ENCODE measurements at regions of chr3 and their contacts with region 1.

Region 1: DNA sequence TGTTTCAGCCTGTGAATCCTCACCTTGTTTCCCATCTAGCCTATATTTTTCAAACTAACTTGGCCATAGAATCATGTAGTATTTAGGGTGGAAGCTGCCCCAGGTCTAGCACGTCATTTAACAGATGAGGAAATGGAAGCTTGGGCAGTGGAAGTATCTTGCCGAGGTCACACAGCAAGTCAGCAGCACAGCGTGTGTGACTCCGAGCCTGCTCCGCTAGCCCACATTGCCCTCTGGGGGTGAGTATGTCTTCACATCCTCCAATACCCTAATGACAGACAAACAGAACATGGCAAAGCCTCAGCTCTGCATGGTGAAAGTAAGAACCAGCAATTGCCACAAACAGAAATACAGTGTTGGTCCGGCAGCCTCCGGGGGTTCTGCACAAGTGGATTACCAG is 2.2 kb upstream of the CCR5 start:
- DNase-seq: peak; percentile 71 to 81 (median 75)
- H3K4me3 ChIP-seq: no peak overlapping the region
- H3K4me3 Mint-ChIP-seq: peak overlapping the region in 7 of 8 donors; percentile 62 to 80 (median 73)
- H3K27ac ChIP-seq: peak overlapping the region; percentile 52
- H3K27ac Mint-ChIP-seq: peak overlapping the region; percentile 57 to 95 (median 83)
- H3K4me1 ChIP-seq: peaks cover 63% of the 10 kb centered on the region
- H3K4me1 Mint-ChIP-seq: peaks cover 42 to 82% (median 67%) of the 10 kb centered on the region in 4 donors
- H3K27me3 ChIP-seq: no peaks in the 10 kb centered on the region
- H3K27me3 Mint-ChIP-seq: no peaks in the 10 kb centered on the region

Region 2: GRCh38 chr3:46070595-46071093 is 297.9 kb before region 1 on chr3:
- CTCF ChIA-PET with region 1: interaction called, 267 read pairs
- POLR2A ChIA-PET with region 1: interaction called, 14 read pairs
- intact Hi-C with region 1: no loop called
- DNase-seq: peak in 4 of 5 donors; percentile 47 to 56 (median 49)
- H3K4me3 ChIP-seq: no peak overlapping the region
- H3K4me3 Mint-ChIP-seq: peak overlapping the region in 6 of 8 donors; percentile 19 to 65 (median 51)
- H3K27ac ChIP-seq: peak overlapping the region; percentile 13
- H3K27ac Mint-ChIP-seq: peak overlapping the region; percentile 15 to 91 (median 73)
- H3K4me1 ChIP-seq: peaks cover 62% of the 10 kb centered on the region
- H3K4me1 Mint-ChIP-seq: peaks cover 52 to 68% (median 58%) of the 10 kb centered on the region in 4 donors
- H3K27me3 ChIP-seq: no peaks in the 10 kb centered on the region
- H3K27me3 Mint-ChIP-seq: no peaks in the 10 kb centered on the region

Region 3: DNA sequence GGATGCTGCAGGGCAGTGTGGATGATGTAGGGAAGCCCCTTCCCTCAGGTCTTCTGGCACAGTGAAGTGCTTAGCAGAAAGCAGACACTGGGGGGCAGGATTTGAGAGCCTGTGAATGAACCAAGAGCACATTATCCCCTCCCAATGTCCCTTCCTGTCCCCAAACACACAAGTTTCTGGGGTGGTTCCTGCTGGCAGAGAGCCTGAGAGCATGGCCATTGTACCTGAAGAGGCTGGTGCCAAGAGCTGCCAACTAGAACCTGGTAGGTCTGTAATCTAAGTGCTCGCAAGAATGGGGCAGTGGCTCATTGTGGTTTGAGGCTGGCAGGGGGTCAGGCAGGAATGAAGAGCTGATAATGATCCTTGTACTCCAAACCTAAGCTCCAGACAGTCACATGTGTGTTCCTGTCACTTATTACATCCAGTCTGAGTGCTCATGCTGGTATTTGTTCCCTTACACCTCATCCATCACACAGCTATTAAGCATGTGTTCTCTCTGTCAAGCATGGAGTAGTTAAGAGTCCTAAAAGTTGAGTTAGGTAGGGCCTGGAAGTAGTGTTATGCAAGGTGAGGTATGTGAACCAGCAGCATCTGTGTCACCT is 153.7 kb before region 1 on chr3:
- CTCF ChIA-PET with region 1: interaction called, 34 read pairs
- POLR2A ChIA-PET with region 1: interaction called, 12 read pairs
- intact Hi-C with region 1: no loop called
- DNase-seq: no peak
- H3K4me3 ChIP-seq: no peak overlapping the region
- H3K4me3 Mint-ChIP-seq: no peak overlapping the region
- H3K27ac ChIP-seq: no peak overlapping the region
- H3K27ac Mint-ChIP-seq: peak overlapping the region in 1 of 7 donors; percentile 44
- H3K4me1 ChIP-seq: peaks cover 22% of the 10 kb centered on the region
- H3K4me1 Mint-ChIP-seq: no peaks in the 10 kb centered on the region
- H3K27me3 ChIP-seq: no peaks in the 10 kb centered on the region
- H3K27me3 Mint-ChIP-seq: no peaks in the 10 kb centered on the region

Region 4: GRCh38 chr3:46284981-46285683 is 83.4 kb before region 1 on chr3:
- CTCF ChIA-PET with region 1: interaction called, 73 read pairs
- POLR2A ChIA-PET with region 1: interaction called, 67 read pairs
- intact Hi-C with region 1: no loop called
- DNase-seq: peak; percentile 63 to 92 (median 69)
- H3K4me3 ChIP-seq: no peak overlapping the region
- H3K4me3 Mint-ChIP-seq: peak overlapping the region in 7 of 8 donors; percentile 4 to 73 (median 62)
- H3K27ac ChIP-seq: peak overlapping the region; percentile 41
- H3K27ac Mint-ChIP-seq: peak overlapping the region; percentile 59 to 93 (median 87)
- H3K4me1 ChIP-seq: peaks cover 78% of the 10 kb centered on the region
- H3K4me1 Mint-ChIP-seq: peaks cover 56 to 92% (median 66%) of the 10 kb centered on the region in 4 donors
- H3K27me3 ChIP-seq: no peaks in the 10 kb centered on the region
- H3K27me3 Mint-ChIP-seq: no peaks in the 10 kb centered on the region

Region 5: DNA sequence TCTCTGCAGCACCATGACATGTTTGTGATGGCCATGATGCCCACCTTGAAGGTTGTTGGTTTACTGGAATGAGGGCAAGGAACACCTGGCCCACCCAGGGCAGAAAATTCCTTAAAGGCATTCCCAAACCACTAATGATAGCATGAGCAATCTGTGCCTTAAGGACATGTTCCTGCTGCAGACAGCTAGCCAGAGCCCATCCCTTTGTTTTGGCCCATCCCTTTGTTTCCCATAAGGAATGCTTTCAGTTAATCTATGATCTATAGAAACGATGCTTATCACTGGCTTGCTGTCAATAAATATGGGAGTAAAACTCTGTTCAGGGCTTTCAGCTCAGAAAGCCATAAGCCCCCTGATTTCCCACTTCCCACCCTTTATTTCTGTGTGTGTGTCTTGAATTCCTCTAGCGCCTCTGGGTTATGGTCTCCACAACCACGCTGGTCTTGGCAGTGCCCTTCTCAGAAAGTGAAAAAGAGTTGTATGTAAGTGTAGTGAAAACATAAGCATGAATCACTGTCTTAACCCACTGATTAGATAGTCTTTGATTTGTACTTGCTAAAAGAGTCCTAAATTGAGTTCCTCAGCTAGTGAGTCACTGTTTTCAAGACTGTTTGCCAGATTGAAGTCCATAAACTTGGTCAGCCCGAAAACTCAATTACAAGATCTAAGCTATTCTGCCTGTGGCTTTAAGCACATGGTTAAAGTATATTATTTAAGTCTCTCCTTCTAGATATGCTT is 33.7 kb before region 1 on chr3:
- CTCF ChIA-PET with region 1: interaction called, 17 read pairs
- POLR2A ChIA-PET with region 1: no interaction called
- intact Hi-C with region 1: no loop called
- DNase-seq: no peak
- H3K4me3 ChIP-seq: no peak overlapping the region
- H3K4me3 Mint-ChIP-seq: peak overlapping the region in 1 of 8 donors; percentile 39
- H3K27ac ChIP-seq: no peak overlapping the region
- H3K27ac Mint-ChIP-seq: peak overlapping the region in 3 of 7 donors; percentile 11 to 25 (median 14)
- H3K4me1 ChIP-seq: peaks cover 9% of the 10 kb centered on the region
- H3K4me1 Mint-ChIP-seq: peaks cover 6 to 19% (median 11%) of the 10 kb centered on the region in 4 donors
- H3K27me3 ChIP-seq: no peaks in the 10 kb centered on the region
- H3K27me3 Mint-ChIP-seq: no peaks in the 10 kb centered on the region

Measured in CD4-positive, alpha-beta memory T cell (primary cell).